MCF 10A (cell line): ENCODE measurements at regions of chr6 and their contacts with region 1.

Region 1: DNA sequence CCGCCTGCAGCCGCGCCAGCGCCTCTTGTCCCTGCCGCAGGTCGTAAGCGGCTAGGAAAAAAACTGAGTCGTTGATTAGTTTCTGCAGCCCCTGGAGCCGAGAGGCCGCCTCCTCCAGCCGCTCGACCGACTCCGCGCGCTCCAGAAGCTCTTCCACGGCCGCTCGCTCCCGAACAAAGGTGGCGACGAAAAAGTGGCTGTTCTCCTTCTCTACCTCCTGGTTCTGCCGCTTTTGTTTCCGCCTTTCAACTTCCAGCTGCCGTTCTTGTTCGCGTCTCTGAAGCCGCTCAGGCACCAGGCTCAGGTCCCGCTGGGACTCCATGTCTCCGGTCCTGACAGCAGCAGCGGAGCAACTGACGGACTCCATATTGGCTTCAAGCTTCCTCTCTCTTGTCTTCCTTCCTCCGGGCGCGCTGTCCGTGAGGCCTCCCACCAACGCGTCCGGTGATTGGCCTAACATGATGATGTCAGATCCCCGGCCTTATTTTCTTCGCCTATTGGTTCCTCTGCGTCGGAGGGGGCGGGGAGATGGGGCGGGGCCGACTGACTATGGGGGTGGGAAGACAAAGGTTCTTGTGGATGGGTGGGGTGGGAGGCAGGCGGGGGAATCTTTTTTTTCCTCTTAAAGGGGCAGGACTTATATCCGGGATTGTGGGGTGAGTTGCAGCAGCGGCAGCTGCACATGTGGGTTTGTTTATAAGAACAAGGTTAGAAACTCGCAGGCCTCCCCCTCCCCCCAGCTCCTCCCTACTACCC is at the start of gene TBCC:
- DNase-seq: peak; percentile 99
- H3K4me3 Mint-ChIP-seq: peak within 1 kb of the TSS; percentile 83
- H3K27ac Mint-ChIP-seq: peak within 1 kb of the TSS; percentile 95
- H3K4me1 Mint-ChIP-seq: peaks cover 24% of the 10 kb centered on the region
- H3K27me3 Mint-ChIP-seq: no peaks in the 10 kb centered on the region
- CTCF ChIP-seq: no peak
- total RNA-seq, gene TBCC: 13.7 and 19.4 TPM in 2 replicates

Region 2: DNA sequence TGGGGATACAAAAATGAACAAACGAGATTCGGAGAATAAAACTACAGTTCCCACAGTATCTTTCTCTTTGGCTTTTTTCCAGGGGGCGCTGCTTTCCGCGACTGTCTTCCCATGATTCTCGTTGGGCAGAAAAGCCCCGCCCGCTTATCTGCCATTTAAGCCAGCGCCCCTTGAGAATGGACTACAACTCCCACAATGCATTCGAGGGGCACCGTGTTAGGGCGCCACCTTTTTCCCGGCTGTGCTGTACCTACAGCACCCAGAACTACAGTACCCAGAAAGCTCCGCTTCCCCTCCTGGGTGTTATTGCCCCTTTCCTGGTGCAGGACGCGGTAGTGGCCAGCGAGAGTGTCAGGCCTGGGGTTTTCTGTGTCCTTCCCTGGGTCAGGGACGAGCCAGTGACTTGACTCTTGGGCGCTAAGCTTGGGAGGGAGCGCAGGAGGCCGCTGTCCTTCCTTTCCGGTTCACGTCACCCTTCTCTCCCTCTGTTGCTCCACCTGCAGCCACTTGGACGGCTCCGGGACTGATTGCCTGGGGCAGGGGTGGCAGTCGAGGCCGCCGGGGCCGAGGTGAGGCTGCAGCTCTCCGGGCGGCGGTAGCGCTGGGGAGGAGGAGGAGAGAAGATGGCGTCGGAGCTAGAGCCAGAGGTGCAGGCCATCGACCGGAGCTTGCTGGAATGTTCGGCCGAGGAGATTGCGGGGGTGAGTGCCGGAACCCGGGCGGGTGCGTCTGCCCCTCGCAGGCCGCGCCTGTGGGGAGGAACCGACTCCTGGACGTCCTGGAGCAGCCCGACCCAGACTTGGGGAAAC is 182.0 kb before region 1 on chr6 and contains the start of gene UBR2:
- CTCF ChIA-PET with region 1: no interaction called
- POLR2A ChIA-PET with region 1: interaction called, 20 read pairs
- intact Hi-C with region 1: no loop called
- DNase-seq: peak; percentile 99
- H3K4me3 Mint-ChIP-seq: peak within 1 kb of the TSS; percentile 79
- H3K27ac Mint-ChIP-seq: peak within 1 kb of the TSS; percentile 81
- H3K4me1 Mint-ChIP-seq: peaks cover 18% of the 10 kb centered on the region
- H3K27me3 Mint-ChIP-seq: no peaks in the 10 kb centered on the region
- CTCF ChIP-seq: no peak
- total RNA-seq, gene UBR2: 20.1 and 23.2 TPM in 2 replicates

Region 3: DNA sequence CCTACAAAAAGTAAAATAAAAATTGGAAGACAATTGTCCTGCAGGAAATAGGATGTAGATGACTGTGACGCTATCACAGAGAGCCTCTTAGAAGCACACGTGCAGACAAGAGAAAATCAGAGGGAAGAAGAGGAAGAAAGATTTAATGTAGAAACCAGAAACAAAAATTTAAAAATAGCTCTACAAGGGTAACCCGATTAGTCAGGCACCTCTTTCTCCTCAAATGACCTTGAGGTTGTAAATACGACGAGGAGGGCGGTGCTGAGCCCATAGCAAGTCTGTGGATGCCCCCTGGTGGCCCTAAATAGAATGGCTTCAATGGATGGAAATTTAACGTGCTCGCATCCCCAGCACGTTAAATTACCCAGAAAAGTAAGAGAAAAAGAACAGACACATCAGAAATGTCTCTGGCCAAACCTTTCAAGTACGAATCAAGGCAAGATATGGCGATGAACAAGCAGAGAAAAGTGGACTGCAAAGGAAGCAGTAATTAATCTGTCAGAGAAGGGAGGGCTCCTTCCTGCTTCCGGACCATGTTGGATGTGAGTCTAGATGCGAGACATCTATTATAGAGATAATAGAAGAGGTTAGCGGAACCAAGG is 19.3 kb before region 1 on chr6:
- CTCF ChIA-PET with region 1: interaction called, 7 read pairs
- POLR2A ChIA-PET with region 1: interaction called, 17 read pairs
- intact Hi-C with region 1: no loop called
- DNase-seq: peak; percentile 87
- H3K4me3 Mint-ChIP-seq: peak overlapping the region; percentile 11
- H3K27ac Mint-ChIP-seq: no peak overlapping the region
- H3K4me1 Mint-ChIP-seq: no peaks in the 10 kb centered on the region
- H3K27me3 Mint-ChIP-seq: peaks cover 5% of the 10 kb centered on the region
- CTCF ChIP-seq: peak; percentile 74

Region 4: GRCh38 chr6:42782622-42783176 is 36.8 kb after region 1 on chr6:
- CTCF ChIA-PET with region 1: interaction called, 8 read pairs
- POLR2A ChIA-PET with region 1: interaction called, 328 read pairs
- intact Hi-C with region 1: loop called (anchors 1 kb)
- DNase-seq: peak; percentile 86
- H3K4me3 Mint-ChIP-seq: peak overlapping the region; percentile 73
- H3K27ac Mint-ChIP-seq: peak overlapping the region; percentile 95
- H3K4me1 Mint-ChIP-seq: peaks cover 8% of the 10 kb centered on the region
- H3K27me3 Mint-ChIP-seq: no peaks in the 10 kb centered on the region
- CTCF ChIP-seq: no peak

Region 5: GRCh38 chr6:42813906-42814444 is 68.1 kb after region 1 on chr6:
- CTCF ChIA-PET with region 1: no interaction called
- POLR2A ChIA-PET with region 1: no interaction called
- intact Hi-C with region 1: no loop called
- DNase-seq: no peak
- H3K4me3 Mint-ChIP-seq: no peak overlapping the region
- H3K27ac Mint-ChIP-seq: no peak overlapping the region
- H3K4me1 Mint-ChIP-seq: no peaks in the 10 kb centered on the region
- H3K27me3 Mint-ChIP-seq: no peaks in the 10 kb centered on the region
- CTCF ChIP-seq: no peak

Region 6: GRCh38 chr6:42928986-42929820 is 183.3 kb after region 1 on chr6 and contains the start of gene CNPY3:
- CTCF ChIA-PET with region 1: no interaction called
- POLR2A ChIA-PET with region 1: interaction called, 11 read pairs
- intact Hi-C with region 1: no loop called
- DNase-seq: peak; percentile 97
- H3K4me3 Mint-ChIP-seq: peak within 1 kb of the TSS; percentile 99
- H3K27ac Mint-ChIP-seq: peak within 1 kb of the TSS; percentile 97
- H3K4me1 Mint-ChIP-seq: peaks cover 40% of the 10 kb centered on the region
- H3K27me3 Mint-ChIP-seq: no peaks in the 10 kb centered on the region
- CTCF ChIP-seq: no peak
- total RNA-seq, gene CNPY3: 21.9 and 22.5 TPM in 2 replicates

Region 7: GRCh38 chr6:43045371-43045930 is 299.6 kb after region 1 on chr6:
- CTCF ChIA-PET with region 1: no interaction called
- POLR2A ChIA-PET with region 1: no interaction called
- intact Hi-C with region 1: no loop called
- DNase-seq: no peak
- H3K4me3 Mint-ChIP-seq: no peak overlapping the region
- H3K27ac Mint-ChIP-seq: no peak overlapping the region
- H3K4me1 Mint-ChIP-seq: peaks cover 1% of the 10 kb centered on the region
- H3K27me3 Mint-ChIP-seq: no peaks in the 10 kb centered on the region
- CTCF ChIP-seq: no peak